ENCODE measurements at regions of chr1 and their contacts with region 1.

Region 1: DNA sequence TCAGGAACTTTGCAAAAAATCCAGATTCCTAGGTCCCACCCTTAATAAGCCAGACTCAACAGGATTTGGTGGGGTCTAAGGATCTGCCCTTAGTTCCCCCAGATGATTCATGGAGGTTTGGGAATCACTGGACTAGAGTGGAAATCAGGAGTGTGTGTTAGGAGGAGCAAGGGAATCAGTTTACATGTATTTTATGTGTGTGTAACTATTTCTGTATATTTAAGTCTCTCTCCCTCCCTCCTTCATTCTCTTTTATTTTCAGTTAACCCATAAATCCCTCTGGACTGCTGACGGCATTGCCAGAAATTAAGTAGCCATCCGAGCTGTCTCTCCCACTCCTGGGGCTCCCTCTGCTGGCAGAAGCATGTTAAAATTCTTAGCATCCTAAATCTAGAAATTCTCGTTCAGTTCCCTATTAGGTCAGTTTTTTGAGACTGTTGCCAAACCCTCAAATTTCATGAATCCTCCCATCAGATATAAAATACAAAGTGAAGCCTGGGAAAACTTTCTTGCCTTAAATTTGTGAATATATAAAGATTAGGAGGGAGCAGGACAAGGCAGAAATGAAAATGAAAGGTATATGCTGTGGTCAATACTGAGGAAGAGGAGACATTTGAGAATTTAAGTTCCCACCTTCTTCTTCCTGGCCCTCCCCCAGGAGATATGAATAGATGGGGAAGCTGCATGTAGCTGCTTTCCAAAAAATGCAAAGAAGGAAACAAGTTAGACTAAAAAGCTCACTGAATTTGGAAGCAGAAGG is 11.7 kb upstream of the HSD11B1 start:
- DNase-seq: peak in 1 of 2 experiments; percentile 82
- H3K4me3 ChIP-seq: no peak overlapping the region
- H3K27ac ChIP-seq: no peak overlapping the region
- H3K4me1 ChIP-seq: peaks cover 0 to 3% (median 0%) of the 10 kb centered on the region in 4 experiments; a peak in 1 of 7 replicates
- H3K27me3 ChIP-seq: no peaks in the 10 kb centered on the region; a peak in 2 of 7 replicates
- CTCF ChIP-seq: peak; percentile 47 to 90 (median 75)
- EP300 ChIP-seq: no peak
- POLR2A ChIP-seq: no peak
- RAD21 ChIP-seq: peak; percentile 94 to 95

Region 2: DNA sequence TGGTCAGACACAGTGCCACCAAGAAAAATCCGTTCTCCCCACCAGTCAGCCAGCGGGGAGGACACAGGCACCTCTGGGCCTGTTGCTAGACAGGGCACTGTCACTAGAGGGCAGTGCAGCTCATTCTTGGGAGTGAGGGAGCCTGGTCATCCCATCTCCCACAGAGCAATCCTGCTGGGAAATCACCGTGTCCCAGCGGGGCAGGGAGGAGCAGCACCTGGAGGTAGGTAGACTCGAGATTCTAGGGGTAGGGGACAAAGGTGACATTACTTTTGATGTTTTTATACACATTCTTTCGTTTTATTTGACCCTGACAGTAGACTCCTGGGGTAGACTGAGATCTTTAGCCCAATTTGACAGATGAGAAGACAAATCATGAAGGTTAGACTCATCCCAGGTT is 116.1 kb before region 1 on chr1:
- CTCF ChIA-PET with region 1: interaction called, 18 read pairs
- POLR2A ChIA-PET with region 1: no interaction called
- DNase-seq: peak; percentile 27 to 94
- H3K4me3 ChIP-seq: no peak overlapping the region
- H3K27ac ChIP-seq: no peak overlapping the region
- H3K4me1 ChIP-seq: peaks cover 0 to 4% (median 0%) of the 10 kb centered on the region in 4 experiments; a peak in 1 of 7 replicates
- H3K27me3 ChIP-seq: no peaks in the 10 kb centered on the region
- CTCF ChIP-seq: peak; percentile 88 to 98 (median 92)
- EP300 ChIP-seq: no peak
- POLR2A ChIP-seq: no peak
- RAD21 ChIP-seq: peak; percentile 86 to 89

Region 3: GRCh38 chr1:209585672-209586071 is 107.3 kb before region 1 on chr1:
- CTCF ChIA-PET with region 1: interaction called, 41 read pairs
- POLR2A ChIA-PET with region 1: no interaction called
- DNase-seq: peak in 1 of 2 experiments; percentile 66
- H3K4me3 ChIP-seq: peak overlapping the region; percentile 22 to 45 (median 38); a peak in 7 of 8 replicates
- H3K27ac ChIP-seq: no peak overlapping the region
- H3K4me1 ChIP-seq: peaks cover 0 to 14% (median 9%) of the 10 kb centered on the region in 4 experiments; a peak in 5 of 7 replicates
- H3K27me3 ChIP-seq: peaks cover 0 to 27% (median 17%) of the 10 kb centered on the region in 4 experiments; a peak in 6 of 7 replicates
- CTCF ChIP-seq: no peak
- EP300 ChIP-seq: no peak
- POLR2A ChIP-seq: no peak
- RAD21 ChIP-seq: no peak

Region 4: GRCh38 chr1:209601809-209602657 is 90.9 kb before region 1 on chr1:
- CTCF ChIA-PET with region 1: interaction called, 11 read pairs
- POLR2A ChIA-PET with region 1: no interaction called
- DNase-seq: no peak
- H3K4me3 ChIP-seq: no peak overlapping the region
- H3K27ac ChIP-seq: no peak overlapping the region
- H3K4me1 ChIP-seq: no peaks in the 10 kb centered on the region
- H3K27me3 ChIP-seq: no peaks in the 10 kb centered on the region
- CTCF ChIP-seq: peak; percentile 75 to 86 (median 84)
- EP300 ChIP-seq: no peak
- POLR2A ChIP-seq: no peak
- RAD21 ChIP-seq: peak; percentile 83 to 84

Region 5: DNA sequence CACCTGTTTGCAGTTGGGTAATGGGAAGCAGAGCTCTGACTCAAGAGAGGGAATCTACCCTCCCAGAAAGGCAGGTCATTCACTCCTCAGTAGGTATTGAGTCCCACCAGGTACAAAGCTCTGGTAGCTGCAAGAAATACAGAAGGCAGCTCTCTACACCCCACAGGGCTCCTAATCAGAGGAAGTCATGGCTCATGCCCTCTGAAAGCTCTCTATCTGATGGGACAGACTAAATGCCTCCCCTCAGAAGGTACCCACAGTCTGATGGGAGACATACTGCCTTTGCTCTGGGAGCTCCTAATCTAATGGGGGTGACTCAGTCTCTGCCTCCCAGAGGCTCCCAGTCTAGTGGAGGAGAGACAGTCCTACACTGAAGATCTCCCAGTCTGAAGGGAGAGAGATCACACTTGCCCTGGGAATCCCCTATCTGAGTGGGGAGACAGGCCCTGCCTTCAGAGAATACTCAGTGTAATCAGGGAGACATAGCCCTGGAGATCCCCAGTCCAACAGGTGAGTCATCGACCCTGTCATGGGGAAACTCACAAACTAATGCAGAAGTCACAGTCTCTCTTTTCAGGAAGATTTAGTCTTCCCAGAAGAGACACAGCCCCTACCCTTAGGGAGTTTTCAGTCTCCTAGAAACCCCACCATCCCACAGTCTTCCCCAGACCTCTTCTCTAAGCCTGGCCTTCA is 85.7 kb before region 1 on chr1:
- CTCF ChIA-PET with region 1: interaction called, 11 read pairs
- POLR2A ChIA-PET with region 1: no interaction called
- DNase-seq: no peak
- H3K4me3 ChIP-seq: no peak overlapping the region
- H3K27ac ChIP-seq: no peak overlapping the region
- H3K4me1 ChIP-seq: no peaks in the 10 kb centered on the region
- H3K27me3 ChIP-seq: no peaks in the 10 kb centered on the region
- CTCF ChIP-seq: no peak
- EP300 ChIP-seq: no peak
- POLR2A ChIP-seq: no peak
- RAD21 ChIP-seq: no peak

Region 6: DNA sequence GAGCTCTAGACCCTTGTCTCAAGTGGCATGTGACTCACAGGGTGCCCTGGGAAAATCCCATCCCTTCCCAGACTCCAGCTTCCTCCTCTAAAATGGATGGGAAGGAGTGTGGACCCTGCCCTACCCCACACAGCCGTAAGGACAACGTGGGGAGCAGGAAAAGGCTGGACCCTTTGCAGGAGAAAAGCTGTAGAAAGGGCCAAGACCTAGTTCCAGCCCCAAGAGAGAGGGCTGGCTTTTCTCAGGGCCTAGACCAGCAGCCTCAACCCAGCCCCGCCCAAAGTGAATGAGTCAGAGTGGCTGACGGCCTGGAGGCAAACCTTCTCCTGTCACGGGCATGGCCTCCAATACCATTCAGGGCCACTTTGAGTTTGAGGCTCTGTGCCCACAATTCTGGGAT is 41.8 kb before region 1 on chr1:
- CTCF ChIA-PET with region 1: interaction called, 11 read pairs
- POLR2A ChIA-PET with region 1: no interaction called
- DNase-seq: no peak
- H3K4me3 ChIP-seq: no peak overlapping the region
- H3K27ac ChIP-seq: no peak overlapping the region
- H3K4me1 ChIP-seq: peaks cover 0 to 11% (median 10%) of the 10 kb centered on the region in 4 experiments; a peak in 4 of 7 replicates
- H3K27me3 ChIP-seq: 0 out of 7 replicates have a peak, but pooled peaks cover 0 to 1% (median 0%) of the 10 kb centered on the region in 4 experiments
- CTCF ChIP-seq: no peak
- EP300 ChIP-seq: no peak
- POLR2A ChIP-seq: no peak
- RAD21 ChIP-seq: no peak

Region 7: GRCh38 chr1:209674957-209675564 is 17.9 kb before region 1 on chr1 and contains the start of gene G0S2:
- CTCF ChIA-PET with region 1: interaction called, 25 read pairs
- POLR2A ChIA-PET with region 1: interaction called, 3 read pairs
- DNase-seq: peak in 1 of 2 experiments; percentile 71
- H3K4me3 ChIP-seq: peak within 1 kb of the TSS; percentile 40 to 64 (median 56)
- H3K27ac ChIP-seq: no peak within 1 kb of the TSS
- H3K4me1 ChIP-seq: peaks cover 0 to 4% (median 3%) of the 10 kb centered on the region in 4 experiments; a peak in 6 of 7 replicates
- H3K27me3 ChIP-seq: peaks cover 18 to 46% (median 42%) of the 10 kb centered on the region in 4 experiments
- CTCF ChIP-seq: no peak
- EP300 ChIP-seq: no peak
- POLR2A ChIP-seq: no peak
- RAD21 ChIP-seq: no peak
- total RNA-seq, gene G0S2: 1.0 and 1.7 TPM in 2 replicates

Region 8: DNA sequence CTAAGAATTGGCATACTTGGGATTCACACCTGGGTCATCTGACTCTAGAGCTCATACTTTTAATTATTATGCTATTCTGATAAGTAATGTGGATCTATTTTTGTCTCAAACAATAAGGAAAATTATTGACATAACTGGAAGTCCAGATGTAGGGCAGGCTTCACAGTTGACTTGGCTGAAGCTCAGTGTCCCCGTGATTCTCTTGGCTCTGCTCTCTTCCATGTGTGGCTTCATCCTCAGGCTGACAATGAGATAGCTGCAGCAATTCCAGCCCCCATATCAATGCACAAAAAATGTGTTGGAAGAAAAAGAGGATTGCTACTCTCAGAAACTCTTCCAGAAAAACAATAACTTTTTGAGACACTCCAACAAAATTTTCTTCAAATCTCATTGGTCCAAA is 35.5 kb after region 1 on chr1:
- CTCF ChIA-PET with region 1: no interaction called
- POLR2A ChIA-PET with region 1: no interaction called
- DNase-seq: no peak
- H3K4me3 ChIP-seq: no peak overlapping the region
- H3K27ac ChIP-seq: no peak overlapping the region
- H3K4me1 ChIP-seq: no peaks in the 10 kb centered on the region
- H3K27me3 ChIP-seq: no peaks in the 10 kb centered on the region
- CTCF ChIP-seq: no peak
- EP300 ChIP-seq: no peak
- POLR2A ChIP-seq: no peak
- RAD21 ChIP-seq: no peak

Measured in H1 (cell line).